GM12878 (cell line): ENCODE measurements at regions of chr22 and their contacts with region 1.

Region 1: GRCh38 chr22:23591201-23591791 is 11.2 kb upstream of the IGLL1 start:
- DNase-seq: no peak
- ATAC-seq: peak; percentile 92
- H3K4me3 ChIP-seq: no peak overlapping the region
- H3K27ac ChIP-seq: no peak overlapping the region
- H3K4me1 ChIP-seq: no peaks in the 10 kb centered on the region
- H3K27me3 ChIP-seq: no peaks in the 10 kb centered on the region; a peak in 1 of 4 replicates
- CTCF ChIP-seq: peak; percentile 75 to 92 (median 92)
- EP300 ChIP-seq: no peak
- POLR2A ChIP-seq: no peak
- RAD21 ChIP-seq: peak; percentile 77

Region 2: GRCh38 chr22:23539135-23539838 is 52.0 kb before region 1 on chr22:
- CTCF ChIA-PET with region 1: no interaction called
- POLR2A ChIA-PET with region 1: no interaction called
- RAD21 ChIA-PET with region 1: no interaction called
- SMC1A ChIA-PET with region 1: no interaction called
- in situ Hi-C with region 1: no loop called
- intact Hi-C with region 1: loop called (anchors 1 kb)
- DNase-seq: peak; percentile 36
- ATAC-seq: peak; percentile 100
- H3K4me3 ChIP-seq: no peak overlapping the region
- H3K27ac ChIP-seq: no peak overlapping the region
- H3K4me1 ChIP-seq: no peaks in the 10 kb centered on the region
- H3K27me3 ChIP-seq: peaks cover 0 to 2% of the 10 kb centered on the region in 2 experiments; a peak in 2 of 4 replicates
- CTCF ChIP-seq: peak; percentile 78 to 90 (median 85)
- EP300 ChIP-seq: no peak
- POLR2A ChIP-seq: no peak
- RAD21 ChIP-seq: peak; percentile 86

Region 3: DNA sequence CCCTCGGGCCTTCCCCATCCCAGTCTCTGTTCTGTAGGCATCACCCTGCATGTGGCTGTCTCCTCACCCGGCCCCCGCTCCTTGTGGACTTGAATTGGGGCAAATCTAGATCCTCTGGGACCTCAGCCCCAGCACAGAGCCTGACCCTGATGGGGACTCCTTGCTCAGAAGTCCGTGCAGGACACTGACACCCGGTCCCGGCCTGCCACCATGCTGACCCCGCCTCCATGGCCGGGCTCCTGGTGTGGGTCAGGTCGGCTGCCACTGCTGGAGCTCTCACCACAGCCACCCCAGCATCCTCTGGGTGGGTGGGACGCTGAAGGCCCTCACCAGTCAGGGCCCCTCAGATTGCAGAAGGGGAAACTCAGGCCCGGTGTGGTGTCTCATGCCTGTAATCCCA is 13.0 kb before region 1 on chr22:
- CTCF ChIA-PET with region 1: interaction called, 14 read pairs
- POLR2A ChIA-PET with region 1: no interaction called
- RAD21 ChIA-PET with region 1: no interaction called
- SMC1A ChIA-PET with region 1: interaction called, 3 read pairs
- in situ Hi-C with region 1: no loop called
- intact Hi-C with region 1: no loop called
- DNase-seq: no peak
- ATAC-seq: no peak
- H3K4me3 ChIP-seq: no peak overlapping the region
- H3K27ac ChIP-seq: no peak overlapping the region
- H3K4me1 ChIP-seq: no peaks in the 10 kb centered on the region
- H3K27me3 ChIP-seq: no peaks in the 10 kb centered on the region; a peak in 2 of 4 replicates
- CTCF ChIP-seq: no peak
- EP300 ChIP-seq: no peak
- POLR2A ChIP-seq: no peak
- RAD21 ChIP-seq: no peak

Region 4: DNA sequence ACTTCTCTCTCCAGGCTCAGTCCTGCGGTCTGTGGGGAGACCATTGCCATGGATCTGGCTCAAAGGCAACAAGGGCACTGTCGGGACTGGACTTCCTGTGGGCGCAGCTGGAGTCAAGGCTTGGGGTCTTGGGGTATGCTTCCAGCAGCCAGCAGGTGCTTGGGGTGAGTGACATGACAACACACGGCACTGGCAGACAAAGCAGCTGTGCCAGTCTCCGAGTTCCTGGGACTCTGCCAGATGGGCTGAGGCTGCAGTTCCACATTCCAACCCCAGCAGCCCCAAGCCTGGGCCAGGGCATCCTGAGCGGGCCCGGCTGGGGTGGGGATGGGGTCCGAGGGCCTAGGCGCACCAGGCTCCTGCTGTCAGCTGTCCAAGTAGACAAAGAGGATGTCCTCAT is 951.3 kb after region 1 on chr22:
- CTCF ChIA-PET with region 1: no interaction called
- POLR2A ChIA-PET with region 1: no interaction called
- RAD21 ChIA-PET with region 1: no interaction called
- SMC1A ChIA-PET with region 1: no interaction called
- in situ Hi-C with region 1: no loop called
- intact Hi-C with region 1: no loop called
- DNase-seq: no peak
- ATAC-seq: no peak
- H3K4me3 ChIP-seq: no peak overlapping the region
- H3K27ac ChIP-seq: no peak overlapping the region
- H3K4me1 ChIP-seq: no peaks in the 10 kb centered on the region
- H3K27me3 ChIP-seq: no peaks in the 10 kb centered on the region
- CTCF ChIP-seq: no peak
- EP300 ChIP-seq: no peak
- POLR2A ChIP-seq: no peak
- RAD21 ChIP-seq: no peak

Region 5: DNA sequence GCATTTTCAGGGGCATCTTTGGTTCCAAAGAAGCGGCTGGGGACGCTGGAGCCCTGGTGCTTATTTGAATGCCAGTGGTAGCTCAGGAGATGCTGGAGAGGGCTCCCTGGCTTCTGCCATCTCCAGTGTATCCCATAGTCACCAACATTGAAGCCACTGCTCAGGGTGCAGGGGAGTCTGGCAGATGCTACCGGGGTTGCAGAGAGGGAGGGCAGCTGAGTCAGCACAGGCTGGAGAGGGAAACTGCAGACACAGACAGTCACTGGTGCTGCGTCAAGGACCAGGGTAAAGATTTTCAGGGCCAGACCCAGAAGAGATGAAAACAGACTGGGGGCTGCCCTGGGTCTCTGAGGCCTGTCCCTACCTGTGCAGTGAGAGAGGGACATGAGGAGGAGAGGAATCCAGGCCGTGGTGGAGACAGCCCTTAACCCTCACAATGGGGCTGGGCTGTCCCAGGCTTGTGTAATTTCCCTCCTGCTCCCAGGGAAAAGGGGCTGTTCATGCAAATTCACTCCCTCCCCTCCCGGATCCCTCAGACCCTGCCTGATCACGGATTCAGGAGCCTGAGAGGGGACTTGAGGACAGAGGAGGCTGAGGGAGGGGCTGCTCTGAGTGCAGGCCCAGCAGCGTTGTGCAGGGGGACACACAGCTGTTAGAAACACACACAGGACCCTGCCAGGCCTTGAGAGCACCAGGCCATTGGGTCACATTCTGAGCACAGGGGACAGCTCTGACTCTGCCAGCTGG is 1846.3 kb after region 1 on chr22:
- CTCF ChIA-PET with region 1: no interaction called
- POLR2A ChIA-PET with region 1: no interaction called
- RAD21 ChIA-PET with region 1: no interaction called
- SMC1A ChIA-PET with region 1: no interaction called
- in situ Hi-C with region 1: loop called (anchors 10 kb)
- intact Hi-C with region 1: no loop called
- DNase-seq: no peak
- ATAC-seq: no peak
- H3K4me3 ChIP-seq: no peak overlapping the region
- H3K27ac ChIP-seq: no peak overlapping the region
- H3K4me1 ChIP-seq: no peaks in the 10 kb centered on the region
- H3K27me3 ChIP-seq: no peaks in the 10 kb centered on the region
- CTCF ChIP-seq: no peak
- EP300 ChIP-seq: no peak
- POLR2A ChIP-seq: no peak
- RAD21 ChIP-seq: no peak